ENCODE measurements at regions of chr15 and their contacts with region 1.

Region 1: DNA sequence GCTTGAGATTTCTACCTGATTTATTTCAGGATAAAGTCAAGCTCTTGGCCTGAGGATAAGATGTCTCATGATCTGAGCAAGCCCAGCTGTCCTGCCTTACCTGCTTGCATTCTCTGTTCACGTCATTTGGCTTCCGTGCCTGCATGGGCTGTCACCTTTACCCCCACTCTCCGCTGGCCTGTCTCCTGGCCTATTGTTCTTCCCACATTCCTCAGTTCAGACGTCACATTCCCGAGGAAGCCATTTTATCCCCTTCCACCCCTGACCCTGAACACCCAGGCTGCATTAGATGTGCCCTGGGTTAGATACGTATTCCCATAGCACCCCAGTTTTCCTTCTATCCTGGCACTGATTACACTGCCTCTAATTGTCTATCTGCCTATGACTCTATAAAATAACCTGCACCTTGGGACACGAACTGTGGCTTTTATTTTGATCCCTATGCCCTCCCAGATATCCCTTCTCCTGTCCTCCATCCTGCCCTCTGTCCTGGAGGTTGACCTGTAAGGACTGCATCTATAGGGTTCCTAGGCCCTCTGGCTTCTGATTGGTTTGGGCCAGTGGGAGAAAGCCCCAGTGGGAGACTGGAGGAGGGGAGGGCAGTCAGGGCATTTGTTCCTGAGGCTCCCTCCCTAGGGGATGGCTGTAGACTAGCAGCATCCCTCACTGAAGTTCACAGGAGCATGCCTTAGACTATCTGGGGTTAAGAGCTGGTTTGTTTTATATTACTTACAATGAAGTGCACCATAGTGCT is 19.2 kb upstream of the UBE2Q2 start:
- DNase-seq: no peak

Region 2: DNA sequence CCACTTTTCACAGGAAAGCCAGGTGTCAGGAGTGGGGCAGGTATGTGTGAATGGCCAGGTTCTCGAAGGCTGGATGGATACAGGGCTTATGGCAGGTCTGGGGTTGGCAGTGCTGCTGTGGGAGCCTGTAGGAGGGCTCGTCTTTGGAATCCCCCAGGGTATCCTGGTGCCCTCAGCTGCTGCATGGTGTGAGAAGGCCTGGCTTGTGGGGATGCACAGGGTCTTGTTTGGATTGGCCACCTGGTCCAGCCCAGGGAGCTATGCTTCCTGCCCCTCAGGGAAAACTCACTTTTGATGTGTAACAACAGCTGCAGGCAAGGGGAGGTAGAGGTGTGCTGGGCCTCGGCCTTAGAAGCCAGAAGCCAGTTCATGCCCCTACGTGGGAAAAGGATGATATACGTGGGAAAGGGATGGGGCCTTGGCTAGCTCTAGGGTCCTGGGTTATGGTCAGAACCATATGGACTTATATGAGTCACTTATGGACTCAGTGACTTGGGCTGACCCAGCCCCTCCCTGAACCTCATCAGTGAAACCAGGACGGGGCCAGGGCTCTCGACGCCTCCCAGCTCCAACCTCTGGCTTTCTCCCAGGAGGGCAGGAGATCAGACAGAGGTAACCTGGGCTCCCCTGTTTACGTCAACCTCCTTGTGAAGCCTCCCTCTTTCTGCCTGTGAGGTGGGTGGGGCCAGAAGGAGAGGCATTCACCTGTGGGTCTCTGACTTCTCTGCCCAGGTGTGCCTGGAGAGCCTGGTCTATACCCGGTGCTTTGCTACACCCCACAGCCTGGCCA is 73.6 kb before region 1 on chr15:
- in situ Hi-C with region 1: no loop called
- DNase-seq: no peak

Region 3: DNA sequence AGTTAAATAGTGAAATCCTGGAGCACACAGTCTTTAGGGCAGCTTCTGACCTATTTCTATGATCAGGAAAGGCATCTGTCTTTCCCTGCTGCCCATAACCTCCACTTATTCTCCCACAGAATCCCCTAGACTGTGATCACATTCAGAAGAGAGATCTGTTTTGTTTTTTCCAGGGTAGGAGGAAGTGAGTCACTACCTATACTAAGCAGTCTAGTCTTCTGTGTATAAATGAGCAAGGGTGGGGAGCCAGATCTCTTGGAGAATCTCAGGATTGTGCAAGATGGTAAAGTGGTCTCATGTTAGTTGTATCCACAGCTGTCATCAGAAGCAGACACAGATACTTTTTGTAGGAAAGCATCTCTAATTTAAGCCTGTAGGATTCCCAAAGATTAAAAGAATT is 67.9 kb after region 1 on chr15:
- in situ Hi-C with region 1: no loop called
- DNase-seq: no peak

Region 4: DNA sequence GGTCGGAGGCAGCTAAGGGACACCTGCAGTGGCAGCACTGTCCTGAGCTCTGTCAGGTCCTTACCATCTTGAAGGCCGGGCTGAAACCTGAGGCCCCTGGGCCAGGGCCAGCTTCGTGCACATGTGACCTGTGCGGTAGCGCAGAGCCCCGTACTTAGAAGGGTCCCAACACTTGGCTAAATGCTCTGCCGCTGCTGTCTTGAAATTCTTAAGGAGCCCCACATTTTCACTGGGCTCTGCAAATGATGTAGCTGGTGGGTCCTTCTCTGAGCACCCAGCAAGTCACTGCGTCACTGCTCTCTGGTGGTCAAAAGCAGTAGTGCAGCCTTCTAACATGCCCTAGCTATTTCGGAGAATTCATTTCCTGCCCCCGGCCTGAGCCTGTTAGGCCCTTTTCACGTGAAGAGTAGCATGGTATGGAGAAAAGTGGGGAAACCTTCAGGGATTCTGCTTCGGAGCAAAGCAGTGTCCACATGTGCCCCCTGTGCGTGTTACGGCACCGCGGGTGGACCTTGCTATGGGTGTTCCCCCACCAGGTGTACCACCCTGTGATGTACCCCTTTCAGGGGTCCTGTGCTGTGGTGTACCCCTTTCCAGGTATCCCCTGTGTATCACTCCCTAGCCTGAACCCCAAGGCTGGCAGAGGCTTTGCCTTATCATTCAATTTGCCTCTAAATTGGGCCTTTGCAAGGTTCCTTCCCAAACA is 315.5 kb after region 1 on chr15:
- in situ Hi-C with region 1: loop called (anchors 10 kb)
- DNase-seq: peak; percentile 87

Measured in G401 (cell line).